ENCODE measurements at regions of chr1 and their contacts with region 1.

Region 1: DNA sequence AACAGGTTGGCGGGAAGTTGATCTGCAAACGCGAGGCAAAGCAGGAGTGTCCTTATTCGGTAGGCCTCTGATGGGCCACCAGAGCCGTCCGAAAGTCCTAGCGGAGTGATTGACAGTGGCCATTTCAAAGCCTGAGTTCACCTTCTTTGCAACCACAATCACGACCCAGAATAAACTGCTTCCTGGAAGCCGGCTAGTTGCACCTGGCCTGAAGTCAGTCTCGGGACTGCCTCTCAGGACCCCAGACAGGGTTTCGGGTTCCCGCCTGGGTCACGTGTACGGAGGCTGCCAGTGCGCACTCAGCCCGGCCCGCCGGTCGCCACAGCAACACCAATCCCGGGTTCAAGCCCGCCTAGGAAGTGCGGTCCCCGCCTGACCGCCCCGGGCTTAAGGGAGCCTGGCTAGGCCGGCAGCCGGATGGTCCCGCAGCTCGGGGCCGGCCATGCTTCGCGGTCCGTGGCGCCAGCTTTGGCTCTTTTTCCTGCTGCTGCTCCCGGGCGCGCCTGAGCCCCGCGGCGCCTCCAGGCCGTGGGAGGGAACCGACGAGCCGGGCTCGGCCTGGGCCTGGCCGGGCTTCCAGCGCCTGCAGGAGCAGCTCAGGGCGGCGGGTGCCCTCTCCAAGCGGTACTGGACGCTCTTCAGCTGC is at the start of gene TOR3A:
- DNase-seq: peak; percentile 92
- H3K4me3 ChIP-seq: peak within 1 kb of the TSS; percentile 83
- H3K27ac ChIP-seq: peak within 1 kb of the TSS; percentile 81
- H3K4me1 ChIP-seq: peaks cover 27% of the 10 kb centered on the region
- H3K27me3 ChIP-seq: no peaks in the 10 kb centered on the region
- CTCF ChIP-seq: no peak
- total RNA-seq, gene TOR3A: 9.6 TPM

Region 2: GRCh38 chr1:179002552-179003345 is 79.1 kb before region 1 on chr1:
- intact Hi-C with region 1: no loop called
- DNase-seq: peak; percentile 77
- H3K4me3 ChIP-seq: peak overlapping the region; percentile 22
- H3K27ac ChIP-seq: no peak overlapping the region
- H3K4me1 ChIP-seq: peaks cover 8% of the 10 kb centered on the region
- H3K27me3 ChIP-seq: no peaks in the 10 kb centered on the region
- CTCF ChIP-seq: peak; percentile 97

Region 3: DNA sequence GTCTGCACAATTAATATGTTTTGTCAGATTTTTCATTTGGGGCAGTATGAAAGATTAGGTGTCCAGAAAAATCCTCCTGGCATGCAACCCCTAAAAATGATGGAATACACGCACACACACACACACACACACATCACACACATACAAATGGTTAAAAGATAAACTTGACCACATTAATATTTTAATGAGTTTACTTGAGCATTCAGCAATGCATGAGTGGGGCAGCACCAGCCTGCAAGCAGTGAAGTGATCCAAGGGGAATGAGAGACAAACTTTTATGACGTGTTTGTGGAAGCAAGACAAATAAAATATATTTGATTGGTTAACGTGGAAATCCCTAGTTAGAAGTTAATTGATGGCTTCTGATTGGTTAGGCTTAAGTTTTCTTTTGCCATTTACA is 182.7 kb after region 1 on chr1:
- intact Hi-C with region 1: no loop called
- DNase-seq: no peak
- H3K4me3 ChIP-seq: no peak overlapping the region
- H3K27ac ChIP-seq: no peak overlapping the region
- H3K4me1 ChIP-seq: no peaks in the 10 kb centered on the region
- H3K27me3 ChIP-seq: no peaks in the 10 kb centered on the region
- CTCF ChIP-seq: no peak

Region 4: GRCh38 chr1:179365320-179366092 is 283.7 kb after region 1 on chr1 and contains the start of gene AXDND1:
- intact Hi-C with region 1: loop called (anchors 5 kb)
- DNase-seq: peak; percentile 84
- H3K4me3 ChIP-seq: peak within 1 kb of the TSS; percentile 82
- H3K27ac ChIP-seq: peak within 1 kb of the TSS; percentile 92
- H3K4me1 ChIP-seq: peaks cover 15% of the 10 kb centered on the region
- H3K27me3 ChIP-seq: no peaks in the 10 kb centered on the region
- CTCF ChIP-seq: no peak
- total RNA-seq, gene AXDND1: not detected

Region 5: DNA sequence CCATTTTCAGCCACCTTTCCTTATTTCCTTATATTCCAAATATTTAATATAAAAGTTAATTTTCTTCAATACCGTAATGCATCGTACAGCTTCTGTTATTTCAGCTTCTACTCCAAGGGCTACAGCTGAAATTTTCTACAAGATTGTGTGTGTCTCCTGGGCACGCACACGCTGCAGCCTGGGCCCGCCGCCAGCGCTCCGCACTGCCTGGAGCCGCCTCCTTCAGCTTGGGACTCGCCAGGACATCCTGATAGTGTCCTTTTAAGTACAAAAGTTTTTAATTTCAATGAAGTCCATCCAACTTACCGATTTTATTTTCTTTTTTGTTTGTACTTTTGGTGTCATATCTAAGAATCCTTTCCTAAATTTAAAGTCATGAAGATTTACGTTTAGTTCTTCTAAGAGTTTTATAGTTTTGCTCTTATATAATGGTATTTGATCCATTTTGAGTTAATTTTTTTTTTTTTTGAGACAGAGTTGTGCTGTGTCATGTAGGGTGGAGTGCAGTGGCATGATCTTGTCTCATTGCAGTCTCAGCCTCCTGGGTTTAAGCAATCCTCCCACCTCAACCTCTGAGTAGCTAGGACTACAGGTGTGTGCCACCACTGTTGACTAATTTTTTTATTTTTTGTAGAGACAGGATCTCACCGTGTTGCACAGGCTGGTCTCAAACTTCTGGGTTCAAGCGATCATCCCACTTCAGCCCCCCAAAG is 366.8 kb after region 1 on chr1:
- intact Hi-C with region 1: no loop called
- DNase-seq: no peak
- H3K4me3 ChIP-seq: no peak overlapping the region
- H3K27ac ChIP-seq: no peak overlapping the region
- H3K4me1 ChIP-seq: no peaks in the 10 kb centered on the region
- H3K27me3 ChIP-seq: peaks cover 8% of the 10 kb centered on the region
- CTCF ChIP-seq: no peak

Measured in left ventricle myocardium inferior (tissue), 1 donor.